Activated CD4-positive, alpha-beta T cell treated with anti-CD3 and anti-CD28 coated beads for 36 hours (primary cell): ENCODE measurements at regions of chr12 and their contacts with region 1.

Region 1: DNA sequence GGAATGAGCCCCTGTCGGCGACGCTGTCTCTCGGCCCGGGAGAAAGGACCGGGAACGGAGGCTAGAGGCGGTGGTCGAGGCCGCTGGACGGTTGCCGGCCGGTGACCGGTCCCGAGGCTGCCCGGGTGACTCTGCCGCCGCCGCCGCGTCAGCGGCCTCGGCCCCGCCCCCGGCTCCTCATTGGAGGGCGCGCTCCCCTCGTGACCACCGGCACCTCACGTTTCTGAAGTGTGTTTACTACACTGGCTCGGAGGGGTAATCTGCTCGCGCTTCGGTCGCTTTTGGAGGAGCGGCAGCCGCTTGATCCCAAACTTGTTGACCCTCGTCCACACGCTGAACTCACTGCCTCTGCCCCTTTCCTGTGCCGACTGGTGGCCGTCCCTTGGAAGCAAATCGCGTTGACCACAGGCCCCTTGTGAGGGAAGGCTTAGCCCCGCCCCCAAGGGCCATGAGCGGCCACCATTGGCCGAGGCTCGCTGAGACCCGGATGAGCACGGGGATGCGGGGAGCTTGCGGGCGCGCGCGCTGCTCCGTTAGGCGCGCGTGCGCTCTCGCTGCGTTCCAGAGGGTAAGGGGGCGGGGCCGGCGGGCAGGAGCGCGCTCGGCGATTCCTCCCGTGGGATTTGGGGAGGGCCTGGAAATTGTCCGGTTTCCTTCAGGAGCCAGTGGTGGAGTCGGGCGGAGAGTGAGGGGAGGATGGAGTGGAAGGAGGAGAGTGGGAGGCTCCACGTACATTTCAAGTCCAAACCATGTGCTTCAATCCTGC is at the start of gene CRY1:
- DNase-seq: peak; percentile 96
- ATAC-seq: peak; percentile 83
- H3K4me3 Mint-ChIP-seq: no peak within 1 kb of the TSS
- H3K27ac Mint-ChIP-seq: peak within 1 kb of the TSS; percentile 99
- H3K4me1 Mint-ChIP-seq: peaks cover 3% of the 10 kb centered on the region
- H3K27me3 Mint-ChIP-seq: peaks cover 7% of the 10 kb centered on the region
- total RNA-seq, gene CRY1: 14.8 to 17.7 TPM

Region 2: GRCh38 chr12:106357549-106358395 is 735.8 kb before region 1 on chr12 and contains the start of gene POLR3B:
- CTCF ChIA-PET with region 1: interaction called, 3 read pairs
- POLR2A ChIA-PET with region 1: no interaction called
- intact Hi-C with region 1: loop called (anchors 1 to 2 kb)
- DNase-seq: peak; percentile 98
- ATAC-seq: peak; percentile 95
- H3K4me3 Mint-ChIP-seq: peak within 1 kb of the TSS; percentile 92
- H3K27ac Mint-ChIP-seq: peak within 1 kb of the TSS; percentile 92
- H3K4me1 Mint-ChIP-seq: peaks cover 14% of the 10 kb centered on the region
- H3K27me3 Mint-ChIP-seq: no peaks in the 10 kb centered on the region
- total RNA-seq, gene POLR3B: 9.1 to 11.7 TPM

Region 3: DNA sequence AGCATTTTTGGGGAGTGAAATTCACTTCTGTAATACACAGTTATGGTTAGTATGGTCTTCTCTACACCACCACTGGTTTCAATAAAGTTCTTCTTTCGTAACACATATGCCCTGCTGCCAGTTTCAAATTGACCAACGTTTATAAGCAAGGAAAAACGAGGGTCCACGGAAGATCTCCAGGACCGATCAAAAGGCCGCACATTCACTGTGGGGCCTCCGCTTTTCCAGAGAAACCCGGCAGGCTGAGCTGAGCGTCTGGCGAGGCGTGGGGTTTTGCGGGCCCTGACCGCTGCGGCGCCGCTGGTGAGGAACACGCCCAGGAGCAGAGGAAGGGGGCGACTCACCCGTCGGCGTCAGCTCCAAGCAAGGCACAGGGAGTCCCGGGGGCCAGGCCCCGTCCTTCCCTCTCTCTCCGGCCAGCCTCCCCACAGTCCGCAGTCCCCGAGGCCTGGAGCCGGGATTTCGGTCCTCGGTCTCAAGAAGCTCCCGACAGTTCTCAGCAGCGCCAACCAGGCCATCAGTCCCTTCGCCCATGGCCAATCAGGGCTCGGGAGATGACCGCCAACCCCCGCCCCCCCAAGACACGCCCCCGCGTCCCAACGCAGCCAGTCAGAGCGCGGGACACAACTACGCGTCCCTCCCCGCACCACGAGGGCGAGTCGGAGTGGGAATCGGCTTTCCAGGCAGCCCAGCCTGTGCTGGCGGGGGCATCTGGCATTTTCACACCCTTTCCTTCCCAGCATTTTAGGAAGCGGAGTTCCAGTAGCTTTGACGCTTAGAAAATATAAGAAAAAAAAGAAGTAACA is 106.8 kb before region 1 on chr12 and contains the start of gene MTERF2:
- CTCF ChIA-PET with region 1: interaction called, 4 read pairs
- POLR2A ChIA-PET with region 1: no interaction called
- intact Hi-C with region 1: loop called (anchors 1 kb)
- DNase-seq: peak; percentile 88
- ATAC-seq: peak; percentile 93
- H3K4me3 Mint-ChIP-seq: peak within 1 kb of the TSS; percentile 85
- H3K27ac Mint-ChIP-seq: peak within 1 kb of the TSS; percentile 75
- H3K4me1 Mint-ChIP-seq: peaks cover 42% of the 10 kb centered on the region
- H3K27me3 Mint-ChIP-seq: no peaks in the 10 kb centered on the region
- total RNA-seq, gene MTERF2: 5.0 to 5.8 TPM

Region 4: DNA sequence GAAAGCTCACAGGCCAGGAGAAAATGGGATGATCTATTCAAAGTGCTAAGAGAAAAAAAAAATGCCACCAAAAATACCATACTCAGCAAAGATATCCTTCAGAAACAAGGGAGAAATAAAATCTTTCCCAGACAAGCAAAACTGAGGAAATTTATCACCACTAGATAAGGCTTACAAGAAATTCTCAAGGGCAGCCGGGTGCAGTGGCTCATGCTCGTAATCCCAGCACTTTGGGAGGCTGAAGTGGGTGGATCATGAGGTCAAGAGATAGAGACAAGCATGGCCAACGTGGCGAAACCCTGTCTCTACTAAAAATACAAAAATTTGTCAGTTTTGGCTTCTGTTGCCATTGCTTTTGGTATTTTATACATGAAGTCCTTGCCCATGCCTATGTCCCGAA is 48.4 kb before region 1 on chr12:
- CTCF ChIA-PET with region 1: no interaction called
- POLR2A ChIA-PET with region 1: no interaction called
- intact Hi-C with region 1: no loop called
- DNase-seq: no peak
- ATAC-seq: no peak
- H3K4me3 Mint-ChIP-seq: no peak overlapping the region
- H3K27ac Mint-ChIP-seq: no peak overlapping the region
- H3K4me1 Mint-ChIP-seq: peaks cover 6% of the 10 kb centered on the region
- H3K27me3 Mint-ChIP-seq: no peaks in the 10 kb centered on the region

Region 5: GRCh38 chr12:107105410-107105703 is 11.8 kb after region 1 on chr12:
- CTCF ChIA-PET with region 1: interaction called, 37 read pairs
- POLR2A ChIA-PET with region 1: interaction called, 4 read pairs
- intact Hi-C with region 1: loop called (anchors 1 kb)
- DNase-seq: no peak
- ATAC-seq: no peak
- H3K4me3 Mint-ChIP-seq: no peak overlapping the region
- H3K27ac Mint-ChIP-seq: no peak overlapping the region
- H3K4me1 Mint-ChIP-seq: peaks cover 5% of the 10 kb centered on the region
- H3K27me3 Mint-ChIP-seq: peaks cover 7% of the 10 kb centered on the region

Region 6: GRCh38 chr12:107372229-107372658 is 278.6 kb after region 1 on chr12:
- CTCF ChIA-PET with region 1: no interaction called
- POLR2A ChIA-PET with region 1: no interaction called
- intact Hi-C with region 1: loop called (anchors 1 to 2 kb)
- DNase-seq: peak; percentile 52
- ATAC-seq: peak; percentile 52
- H3K4me3 Mint-ChIP-seq: peak overlapping the region; percentile 10
- H3K27ac Mint-ChIP-seq: peak overlapping the region; percentile 99
- H3K4me1 Mint-ChIP-seq: peaks cover 80% of the 10 kb centered on the region
- H3K27me3 Mint-ChIP-seq: no peaks in the 10 kb centered on the region

Region 7: DNA sequence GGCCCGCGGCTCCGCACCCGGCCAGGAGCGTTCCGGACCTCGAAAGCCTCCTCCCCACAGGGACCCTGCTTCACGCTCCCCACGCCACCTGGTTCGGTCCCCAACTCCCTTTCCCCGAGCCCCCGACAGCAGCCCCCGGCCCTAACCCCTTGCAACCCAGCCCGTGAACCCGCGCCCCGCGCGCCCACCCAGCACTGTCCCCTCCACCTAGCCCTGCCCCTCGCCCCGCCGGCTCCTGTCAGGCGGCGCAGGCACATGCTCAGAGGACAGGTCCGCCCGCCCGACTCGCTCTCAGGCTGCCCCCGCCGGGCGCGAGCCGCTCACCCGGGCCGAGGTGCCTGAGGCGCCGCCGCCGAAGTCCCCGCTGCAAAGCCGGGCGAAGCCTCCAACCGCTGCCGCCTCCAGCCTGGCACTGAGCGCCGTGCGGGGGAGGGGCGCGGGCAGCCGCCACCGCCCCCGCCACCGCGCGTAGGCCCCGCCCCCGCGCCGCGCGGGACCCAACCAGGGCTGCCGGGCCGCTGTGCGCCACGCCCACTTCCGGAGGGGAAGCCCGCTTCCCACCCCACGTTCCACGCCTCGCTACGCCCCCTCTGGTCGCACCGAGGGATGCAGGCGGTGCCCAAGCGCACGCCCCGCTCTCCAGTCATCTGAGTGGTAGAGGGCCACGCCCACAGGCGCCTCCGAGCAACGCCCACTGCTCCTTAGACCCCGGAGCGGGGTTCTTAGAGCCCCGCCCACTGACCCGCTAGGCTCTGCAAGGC is 1637.7 kb after region 1 on chr12 and contains the start of gene CORO1C:
- CTCF ChIA-PET with region 1: no interaction called
- POLR2A ChIA-PET with region 1: no interaction called
- intact Hi-C with region 1: loop called in 1 of 2 experiments (anchors 5 kb)
- DNase-seq: peak; percentile 98
- ATAC-seq: peak; percentile 78
- H3K4me3 Mint-ChIP-seq: peak within 1 kb of the TSS; percentile 88
- H3K27ac Mint-ChIP-seq: peak within 1 kb of the TSS; percentile 93
- H3K4me1 Mint-ChIP-seq: peaks cover 36% of the 10 kb centered on the region
- H3K27me3 Mint-ChIP-seq: no peaks in the 10 kb centered on the region
- total RNA-seq, gene CORO1C: 83.5 to 90.8 TPM